GM18951 (cell line): ENCODE measurements at regions of chr11 and their contacts with region 1.

Region 1: GRCh38 chr11:117843666-117844484 is 19.3 kb upstream of the FXYD2 start:
- POLR2A ChIP-seq: no peak

Region 2: GRCh38 chr11:118046051-118046963 is 202.4 kb after region 1 on chr11:
- in situ Hi-C with region 1: loop called (anchors 5 kb)
- POLR2A ChIP-seq: no peak